ENCODE measurements at regions of chr6 and their contacts with region 1.

Region 1: DNA sequence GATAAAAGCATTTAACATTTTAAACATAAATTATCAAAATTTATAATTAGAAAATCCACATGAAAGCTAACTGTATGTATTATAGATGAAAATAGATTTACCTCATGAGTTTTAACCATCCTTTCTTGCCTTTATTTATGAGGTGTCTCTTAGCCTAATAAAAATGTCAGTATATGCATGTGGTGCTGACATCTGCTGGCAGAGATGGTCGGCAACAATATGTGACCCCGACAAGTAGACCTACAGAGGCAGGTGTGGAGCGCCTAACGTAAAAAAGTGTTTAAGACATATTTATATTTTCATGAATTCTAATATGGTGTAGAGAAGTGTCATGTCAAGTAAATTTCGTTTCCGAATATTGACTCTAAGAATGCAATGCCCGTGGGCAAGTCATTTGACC is 149.0 kb upstream of the FUT9 start:
- DNase-seq: no peak
- ATAC-seq: peak; percentile 69
- H3K4me3 ChIP-seq: no peak overlapping the region
- H3K27ac ChIP-seq: no peak overlapping the region
- H3K4me1 ChIP-seq: no peaks in the 10 kb centered on the region
- H3K27me3 ChIP-seq: no peaks in the 10 kb centered on the region
- CTCF ChIP-seq: peak; percentile 32 to 56 (median 45); a peak in 4 of 6 replicates
- EP300 ChIP-seq: no peak
- POLR2A ChIP-seq: no peak
- RAD21 ChIP-seq: peak; percentile 65

Region 2: DNA sequence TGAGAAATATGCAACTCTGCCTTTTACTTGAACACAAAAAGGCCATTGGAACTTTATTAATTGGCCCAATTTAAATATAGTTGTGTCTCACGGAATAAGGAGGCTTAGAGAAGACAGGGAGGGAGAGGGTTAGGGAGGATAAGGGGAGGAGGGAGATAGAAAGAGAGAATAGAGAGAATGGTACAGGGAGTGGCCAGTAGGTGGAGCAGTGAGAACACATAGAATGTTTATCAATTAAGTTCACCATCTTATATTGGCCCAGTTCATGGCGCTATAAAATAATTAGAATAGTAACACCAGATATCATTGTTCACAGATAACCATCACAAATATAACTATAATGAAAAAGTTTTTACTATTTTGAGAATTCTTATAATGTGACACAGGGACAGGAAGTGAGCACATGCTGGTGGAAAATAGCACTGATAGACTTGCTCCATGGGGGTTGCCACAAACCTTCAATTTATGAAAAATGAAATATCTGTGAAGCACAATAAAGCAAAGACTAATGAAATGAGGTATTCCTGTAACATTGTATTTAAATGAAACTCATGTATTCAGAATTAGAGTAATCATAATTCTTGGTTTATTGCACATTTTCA is 663.5 kb before region 1 on chr6:
- CTCF ChIA-PET with region 1: interaction called, 5 read pairs
- POLR2A ChIA-PET with region 1: no interaction called
- RAD21 ChIA-PET with region 1: no interaction called
- SMC1A ChIA-PET with region 1: no interaction called
- in situ Hi-C with region 1: no loop called
- intact Hi-C with region 1: loop called (anchors 10 kb)
- DNase-seq: no peak
- ATAC-seq: peak; percentile 91
- H3K4me3 ChIP-seq: no peak overlapping the region
- H3K27ac ChIP-seq: no peak overlapping the region
- H3K4me1 ChIP-seq: no peaks in the 10 kb centered on the region
- H3K27me3 ChIP-seq: no peaks in the 10 kb centered on the region
- CTCF ChIP-seq: peak; percentile 61 to 68 (median 62)
- EP300 ChIP-seq: no peak
- POLR2A ChIP-seq: no peak
- RAD21 ChIP-seq: peak; percentile 27; the same call in 1 of the 2 replicates

Region 3: GRCh38 chr6:95364016-95364604 is 502.6 kb before region 1 on chr6:
- CTCF ChIA-PET with region 1: interaction called, 4 read pairs
- POLR2A ChIA-PET with region 1: no interaction called
- RAD21 ChIA-PET with region 1: no interaction called
- SMC1A ChIA-PET with region 1: interaction called, 4 read pairs
- in situ Hi-C with region 1: no loop called
- intact Hi-C with region 1: loop called (anchors 2 kb)
- DNase-seq: no peak
- ATAC-seq: peak; percentile 74
- H3K4me3 ChIP-seq: no peak overlapping the region
- H3K27ac ChIP-seq: no peak overlapping the region
- H3K4me1 ChIP-seq: no peaks in the 10 kb centered on the region
- H3K27me3 ChIP-seq: no peaks in the 10 kb centered on the region
- CTCF ChIP-seq: peak; percentile 27 to 54 (median 31); a peak in 4 of 6 replicates
- EP300 ChIP-seq: no peak
- POLR2A ChIP-seq: no peak
- RAD21 ChIP-seq: peak; percentile 54; the same call in 1 of the 2 replicates

Region 4: DNA sequence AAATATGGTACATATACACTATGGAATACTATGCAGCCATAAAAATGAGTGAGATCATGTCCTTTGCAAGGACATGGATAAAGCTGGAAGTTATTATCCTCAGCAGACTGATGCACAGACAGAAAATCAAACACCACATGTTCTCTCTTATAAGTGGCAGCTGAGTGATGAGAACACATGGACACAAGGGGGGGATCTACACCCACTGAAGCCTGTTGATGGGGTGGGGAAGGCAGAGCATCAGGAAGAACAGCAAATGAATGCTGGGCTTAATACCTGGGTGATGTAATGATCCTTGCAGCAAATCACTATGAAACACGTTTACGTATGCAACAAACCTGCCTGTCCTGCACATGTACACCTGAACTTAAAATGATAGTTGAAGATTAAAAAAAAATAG is 218.1 kb before region 1 on chr6:
- CTCF ChIA-PET with region 1: interaction called, 4 read pairs
- POLR2A ChIA-PET with region 1: no interaction called
- RAD21 ChIA-PET with region 1: no interaction called
- SMC1A ChIA-PET with region 1: interaction called, 3 read pairs
- in situ Hi-C with region 1: no loop called
- intact Hi-C with region 1: loop called (anchors 2 kb)
- DNase-seq: no peak
- ATAC-seq: peak; percentile 54; the same call in 2 of the 3 replicates
- H3K4me3 ChIP-seq: no peak overlapping the region
- H3K27ac ChIP-seq: no peak overlapping the region
- H3K4me1 ChIP-seq: no peaks in the 10 kb centered on the region
- H3K27me3 ChIP-seq: no peaks in the 10 kb centered on the region
- CTCF ChIP-seq: peak in 2 of 3 experiments; percentile 14 to 18; a peak in 2 of 6 replicates
- EP300 ChIP-seq: no peak
- POLR2A ChIP-seq: no peak
- RAD21 ChIP-seq: peak; percentile 55

Region 5: DNA sequence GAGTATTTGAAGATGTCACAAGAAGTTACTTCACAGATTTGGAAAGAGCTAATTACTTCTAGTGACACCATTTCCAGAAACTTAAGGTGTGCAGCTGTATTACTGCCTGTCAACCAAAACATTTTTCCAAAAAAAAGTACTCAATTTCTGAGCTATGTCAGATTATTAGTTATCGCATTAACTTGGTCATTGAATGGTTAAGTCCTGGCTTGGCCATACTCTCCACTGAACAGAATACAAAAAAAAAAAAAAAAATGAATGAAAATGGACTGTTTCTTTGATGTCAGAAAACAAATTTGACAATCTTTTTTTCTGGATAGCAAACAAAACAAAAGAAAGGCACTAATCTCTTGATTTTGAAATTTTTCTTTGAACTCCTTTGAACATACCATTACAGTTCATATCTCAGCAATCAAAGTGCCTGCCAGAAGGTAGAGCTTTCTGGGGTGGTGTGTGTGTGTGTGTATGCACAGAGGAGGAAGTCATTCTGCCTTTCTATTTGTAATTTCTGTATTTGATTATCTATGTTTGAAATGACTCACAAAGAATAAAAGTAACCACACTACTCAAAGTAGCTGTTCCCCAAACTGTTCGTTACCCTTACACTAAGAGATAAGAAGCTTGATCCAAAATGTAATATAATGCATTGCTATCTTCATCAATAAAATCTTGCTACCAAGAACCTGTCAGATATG is 61.7 kb before region 1 on chr6:
- CTCF ChIA-PET with region 1: no interaction called
- POLR2A ChIA-PET with region 1: no interaction called
- RAD21 ChIA-PET with region 1: no interaction called
- SMC1A ChIA-PET with region 1: no interaction called
- in situ Hi-C with region 1: no loop called
- intact Hi-C with region 1: no loop called
- DNase-seq: no peak
- ATAC-seq: peak; percentile 94
- H3K4me3 ChIP-seq: no peak overlapping the region
- H3K27ac ChIP-seq: no peak overlapping the region
- H3K4me1 ChIP-seq: no peaks in the 10 kb centered on the region
- H3K27me3 ChIP-seq: no peaks in the 10 kb centered on the region
- CTCF ChIP-seq: no peak
- EP300 ChIP-seq: no peak
- POLR2A ChIP-seq: no peak
- RAD21 ChIP-seq: no peak

Measured in GM12878 (cell line).